Caco-2 (cell line): ENCODE measurements at regions of chr12 and their contacts with region 1.

Region 1: GRCh38 chr12:53180220-53180930 is at the starts of genes CSAD and ZNF740:
- DNase-seq: peak; percentile 98
- H3K4me3 ChIP-seq: peak within 1 kb of the TSS; percentile 71
- H3K4me3 Mint-ChIP-seq: peak within 1 kb of the TSS; percentile 83
- H3K27ac Mint-ChIP-seq: peak within 1 kb of the TSS; percentile 85
- H3K4me1 ChIP-seq: peaks cover 21% of the 10 kb centered on the region
- H3K4me1 Mint-ChIP-seq: peaks cover 23% of the 10 kb centered on the region
- H3K27me3 ChIP-seq: no peaks in the 10 kb centered on the region
- H3K27me3 Mint-ChIP-seq: no peaks in the 10 kb centered on the region
- CTCF ChIP-seq: no peak
- total RNA-seq, gene CSAD: 20.1 and 23.0 TPM in 2 replicates
- total RNA-seq, gene ZNF740: 35.8 and 43.0 TPM in 2 replicates

Region 2: GRCh38 chr12:53079226-53080117 is 100.9 kb before region 1 on chr12 and contains the start of gene SPRYD3:
- CTCF ChIA-PET with region 1: interaction called, 8 read pairs
- POLR2A ChIA-PET with region 1: interaction called, 14 read pairs
- intact Hi-C with region 1: no loop called
- DNase-seq: peak; percentile 97 to 98
- H3K4me3 ChIP-seq: peak within 1 kb of the TSS; percentile 71
- H3K4me3 Mint-ChIP-seq: peak within 1 kb of the TSS; percentile 89
- H3K27ac Mint-ChIP-seq: peak within 1 kb of the TSS; percentile 94
- H3K4me1 ChIP-seq: peaks cover 4% of the 10 kb centered on the region; the same call in 1 of the 2 replicates
- H3K4me1 Mint-ChIP-seq: peaks cover 11% of the 10 kb centered on the region
- H3K27me3 ChIP-seq: no peaks in the 10 kb centered on the region
- H3K27me3 Mint-ChIP-seq: no peaks in the 10 kb centered on the region
- CTCF ChIP-seq: no peak
- total RNA-seq, gene SPRYD3: 8.2 and 8.8 TPM in 2 replicates

Region 3: GRCh38 chr12:53098982-53099651 is 81.3 kb before region 1 on chr12:
- CTCF ChIA-PET with region 1: interaction called, 3 read pairs
- POLR2A ChIA-PET with region 1: interaction called, 12 read pairs
- intact Hi-C with region 1: no loop called
- DNase-seq: peak; percentile 90
- H3K4me3 ChIP-seq: no peak overlapping the region
- H3K4me3 Mint-ChIP-seq: peak overlapping the region; percentile 68
- H3K27ac Mint-ChIP-seq: peak overlapping the region; percentile 49
- H3K4me1 ChIP-seq: peaks cover 36% of the 10 kb centered on the region
- H3K4me1 Mint-ChIP-seq: peaks cover 42% of the 10 kb centered on the region
- H3K27me3 ChIP-seq: no peaks in the 10 kb centered on the region
- H3K27me3 Mint-ChIP-seq: no peaks in the 10 kb centered on the region
- CTCF ChIP-seq: peak; percentile 92 to 93

Region 4: GRCh38 chr12:53143355-53143754 is 37.0 kb before region 1 on chr12:
- CTCF ChIA-PET with region 1: no interaction called
- POLR2A ChIA-PET with region 1: interaction called, 11 read pairs
- intact Hi-C with region 1: no loop called
- DNase-seq: peak; percentile 68 to 70
- H3K4me3 ChIP-seq: no peak overlapping the region
- H3K4me3 Mint-ChIP-seq: no peak overlapping the region
- H3K27ac Mint-ChIP-seq: peak overlapping the region; percentile 2
- H3K4me1 ChIP-seq: peaks cover 22% of the 10 kb centered on the region
- H3K4me1 Mint-ChIP-seq: no peaks in the 10 kb centered on the region
- H3K27me3 ChIP-seq: no peaks in the 10 kb centered on the region
- H3K27me3 Mint-ChIP-seq: no peaks in the 10 kb centered on the region
- CTCF ChIP-seq: no peak